Activated T-helper 2 cell treated with anti-CD3 and anti-CD28 coated beads, Interferon-gamma antibody, Interleukin-2, Interleukin-4, amounts not matched to agents 10 μg/mL and 5 μg/mL and 100 μg/mL, durations not matched to agents 14 hours and 24 hours and 36 hours (primary cell): ENCODE measurements at regions of chr4 and their contacts with region 1.

Region 1: DNA sequence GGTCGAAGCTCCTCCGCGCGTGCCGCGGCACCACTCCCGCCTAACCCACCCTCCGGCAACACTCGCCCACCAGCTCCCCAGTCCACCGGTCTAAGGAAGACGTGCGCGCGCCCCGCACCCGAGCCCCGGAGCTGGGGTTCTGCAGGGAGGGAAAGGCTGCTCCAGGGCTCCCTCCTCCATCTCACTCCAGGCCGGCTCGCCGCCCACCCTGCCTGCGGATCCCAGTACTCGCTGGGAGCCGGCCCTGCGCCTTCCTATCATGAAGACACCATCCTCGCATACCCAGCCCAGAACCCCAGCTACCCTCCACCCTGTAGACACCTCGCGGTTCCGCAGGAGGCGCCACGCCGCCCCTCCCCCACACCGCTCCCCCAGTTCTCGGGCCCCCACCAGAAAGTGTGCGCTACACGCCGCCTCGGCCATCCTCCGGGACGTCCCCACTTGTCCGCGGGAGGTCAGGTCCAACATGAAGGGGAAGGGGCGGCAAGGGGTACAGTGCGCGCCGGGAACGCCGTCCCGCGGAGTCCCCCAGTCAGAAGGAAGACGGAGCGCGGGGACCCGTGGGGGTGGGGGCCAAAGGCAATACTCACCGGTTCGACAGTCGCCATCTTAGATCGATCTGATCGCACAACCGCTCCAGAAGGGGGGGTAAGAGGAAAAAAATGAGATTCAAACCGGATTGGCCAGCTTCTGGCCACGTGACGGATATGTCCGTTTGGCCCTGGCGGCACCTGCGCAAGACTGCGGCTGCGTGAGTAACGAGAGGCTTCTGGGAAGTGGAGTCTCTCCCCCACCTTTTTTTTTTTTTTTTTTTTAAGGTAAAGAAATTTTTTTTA is at the start of gene EIF4E:
- DNase-seq: peak; percentile 97
- H3K4me3 Mint-ChIP-seq: peak within 1 kb of the TSS; percentile 92
- H3K27ac Mint-ChIP-seq: peak within 1 kb of the TSS; percentile 95
- H3K4me1 Mint-ChIP-seq: peaks cover 33% of the 10 kb centered on the region
- H3K27me3 Mint-ChIP-seq: no peaks in the 10 kb centered on the region
- total RNA-seq, gene EIF4E: 142 and 153 TPM in 2 replicates

Region 2: DNA sequence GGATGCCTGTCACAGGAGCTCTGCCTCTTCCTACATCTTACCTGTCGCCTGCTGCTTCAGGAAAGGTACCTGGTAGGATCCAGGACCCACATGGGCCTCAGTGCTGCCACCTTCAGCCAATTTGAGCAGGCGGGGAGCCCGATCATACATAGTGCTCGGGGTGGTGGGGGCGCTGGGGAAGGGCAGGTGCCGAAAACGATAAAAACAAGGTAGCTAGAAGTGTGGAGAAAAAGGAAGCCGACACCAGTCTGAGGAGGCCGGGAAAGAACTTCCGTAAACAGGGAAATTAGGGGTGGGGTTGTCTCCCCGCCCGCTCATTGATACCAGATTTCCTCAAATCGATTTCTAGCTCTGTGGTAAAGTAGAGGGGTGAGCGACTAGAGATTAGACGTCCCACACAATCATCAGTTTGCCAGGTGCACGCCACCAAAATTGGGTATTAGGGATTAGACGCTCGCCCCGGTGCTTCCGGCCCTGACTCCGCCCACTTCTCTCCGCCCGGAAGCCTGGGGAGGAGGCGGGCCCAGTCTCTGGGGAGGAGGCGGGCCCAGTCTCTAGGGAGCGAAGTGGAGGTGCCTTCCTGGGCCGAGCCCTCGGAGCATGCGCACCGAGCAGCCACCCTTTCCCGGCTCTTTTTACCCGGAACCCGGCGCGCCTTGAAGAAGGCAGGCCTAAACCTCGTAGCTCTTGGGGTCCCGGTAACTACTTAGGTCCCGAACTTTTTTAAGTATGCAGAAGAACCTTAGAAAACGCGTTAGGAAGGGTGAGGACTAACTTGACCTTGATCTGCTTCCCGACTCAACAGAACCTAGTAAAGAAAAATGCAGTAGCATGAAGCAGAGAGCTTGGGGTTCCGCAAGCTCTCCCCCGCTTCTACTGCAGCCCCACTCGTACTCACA is 785.5 kb before region 1 on chr4 and contains the start of gene STPG2:
- intact Hi-C with region 1: loop called (anchors 5 kb)
- DNase-seq: peak; percentile 88
- H3K4me3 Mint-ChIP-seq: peak within 1 kb of the TSS; percentile 83
- H3K27ac Mint-ChIP-seq: peak within 1 kb of the TSS; percentile 90
- H3K4me1 Mint-ChIP-seq: peaks cover 26% of the 10 kb centered on the region
- H3K27me3 Mint-ChIP-seq: peaks cover 13% of the 10 kb centered on the region
- total RNA-seq, gene STPG2: not detected in 2 replicates

Region 3: GRCh38 chr4:98446499-98447375 is 482.0 kb before region 1 on chr4:
- intact Hi-C with region 1: loop called (anchors 10 kb)
- DNase-seq: peak; percentile 60
- H3K4me3 Mint-ChIP-seq: peak overlapping the region; percentile 63
- H3K27ac Mint-ChIP-seq: peak overlapping the region; percentile 92
- H3K4me1 Mint-ChIP-seq: peaks cover 42% of the 10 kb centered on the region
- H3K27me3 Mint-ChIP-seq: no peaks in the 10 kb centered on the region

Region 4: GRCh38 chr4:98601708-98602107 is 327.0 kb before region 1 on chr4:
- intact Hi-C with region 1: loop called (anchors 1 kb)
- DNase-seq: no peak
- H3K4me3 Mint-ChIP-seq: peak overlapping the region; percentile 60
- H3K27ac Mint-ChIP-seq: peak overlapping the region; percentile 93
- H3K4me1 Mint-ChIP-seq: peaks cover 51% of the 10 kb centered on the region
- H3K27me3 Mint-ChIP-seq: no peaks in the 10 kb centered on the region

Region 5: GRCh38 chr4:99088481-99089365 is 160.0 kb after region 1 on chr4 and contains the start of gene ADH5:
- intact Hi-C with region 1: loop called (anchors 2 kb)
- DNase-seq: peak; percentile 80
- H3K4me3 Mint-ChIP-seq: peak within 1 kb of the TSS; percentile 95
- H3K27ac Mint-ChIP-seq: peak within 1 kb of the TSS; percentile 92
- H3K4me1 Mint-ChIP-seq: peaks cover 26% of the 10 kb centered on the region
- H3K27me3 Mint-ChIP-seq: peaks cover 4% of the 10 kb centered on the region
- total RNA-seq, gene ADH5: 93.8 and 98.6 TPM in 2 replicates

Region 6: GRCh38 chr4:99282731-99283130 is 354.0 kb after region 1 on chr4:
- intact Hi-C with region 1: no loop called
- DNase-seq: no peak
- H3K4me3 Mint-ChIP-seq: no peak overlapping the region
- H3K27ac Mint-ChIP-seq: no peak overlapping the region
- H3K4me1 Mint-ChIP-seq: no peaks in the 10 kb centered on the region
- H3K27me3 Mint-ChIP-seq: peaks cover 1% of the 10 kb centered on the region

Region 7: GRCh38 chr4:99847362-99847976 is 918.7 kb after region 1 on chr4:
- intact Hi-C with region 1: loop called (anchors 10 kb)
- DNase-seq: no peak
- H3K4me3 Mint-ChIP-seq: peak overlapping the region; percentile 62
- H3K27ac Mint-ChIP-seq: peak overlapping the region; percentile 91
- H3K4me1 Mint-ChIP-seq: peaks cover 64% of the 10 kb centered on the region
- H3K27me3 Mint-ChIP-seq: no peaks in the 10 kb centered on the region